H1 (cell line): ENCODE measurements at regions of chr2 and their contacts with region 1.

Region 1: GRCh38 chr2:229342376-229342775 is 71.3 kb upstream of the PID1 start:
- DNase-seq: peak; percentile 38 to 89
- H3K4me3 ChIP-seq: no peak overlapping the region
- H3K27ac ChIP-seq: no peak overlapping the region
- H3K4me1 ChIP-seq: no peaks in the 10 kb centered on the region
- H3K27me3 ChIP-seq: no peaks in the 10 kb centered on the region
- CTCF ChIP-seq: peak; percentile 84 to 85 (median 84)
- EP300 ChIP-seq: no peak
- POLR2A ChIP-seq: no peak
- RAD21 ChIP-seq: peak; percentile 82 to 87

Region 2: GRCh38 chr2:229282758-229283546 is 59.4 kb before region 1 on chr2:
- CTCF ChIA-PET with region 1: interaction called, 12 read pairs
- POLR2A ChIA-PET with region 1: no interaction called
- DNase-seq: no peak
- H3K4me3 ChIP-seq: no peak overlapping the region
- H3K27ac ChIP-seq: no peak overlapping the region
- H3K4me1 ChIP-seq: no peaks in the 10 kb centered on the region
- H3K27me3 ChIP-seq: no peaks in the 10 kb centered on the region
- CTCF ChIP-seq: no peak
- EP300 ChIP-seq: no peak
- POLR2A ChIP-seq: no peak
- RAD21 ChIP-seq: no peak

Region 3: DNA sequence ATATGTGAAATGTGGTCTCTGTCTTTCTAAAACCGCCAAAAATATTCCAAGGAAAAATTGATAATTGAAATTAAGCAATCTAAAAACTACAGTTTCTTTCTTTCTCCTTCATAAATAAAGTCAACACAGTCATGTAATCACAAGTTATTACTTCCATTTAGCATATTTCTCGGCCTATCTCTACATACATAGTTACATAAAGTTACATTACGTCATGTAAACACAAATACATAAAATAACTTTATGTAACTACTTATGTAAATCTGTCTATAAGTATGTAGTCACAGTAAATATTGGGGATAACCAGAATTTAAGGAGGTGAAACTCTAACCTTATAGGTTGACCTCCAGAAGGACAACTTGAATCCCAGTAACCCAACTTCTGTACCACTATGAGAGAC is 22.8 kb before region 1 on chr2:
- CTCF ChIA-PET with region 1: interaction called, 15 read pairs
- POLR2A ChIA-PET with region 1: no interaction called
- DNase-seq: no peak
- H3K4me3 ChIP-seq: no peak overlapping the region
- H3K27ac ChIP-seq: no peak overlapping the region
- H3K4me1 ChIP-seq: no peaks in the 10 kb centered on the region
- H3K27me3 ChIP-seq: no peaks in the 10 kb centered on the region
- CTCF ChIP-seq: no peak
- EP300 ChIP-seq: no peak
- POLR2A ChIP-seq: no peak
- RAD21 ChIP-seq: no peak

Region 4: DNA sequence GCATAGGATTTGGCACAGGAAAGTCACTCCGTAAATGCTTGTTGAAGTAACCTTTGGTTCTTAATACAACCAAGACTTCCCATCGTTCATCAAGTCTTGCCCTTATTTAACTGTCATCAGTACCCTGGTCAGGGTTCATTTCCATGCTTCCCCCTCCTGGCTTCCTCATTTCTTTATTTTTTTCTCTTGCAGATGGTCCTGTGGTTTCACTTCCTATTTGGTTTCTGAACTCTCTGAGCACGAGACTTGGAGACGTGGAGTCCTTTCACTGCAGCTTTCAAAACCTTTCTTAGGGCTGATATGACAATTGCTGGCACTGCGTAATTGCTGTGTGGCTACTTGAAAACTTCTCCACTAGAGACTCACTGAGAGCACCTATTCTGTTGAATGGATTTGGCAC is 11.4 kb before region 1 on chr2:
- CTCF ChIA-PET with region 1: interaction called, 21 read pairs
- POLR2A ChIA-PET with region 1: no interaction called
- DNase-seq: no peak
- H3K4me3 ChIP-seq: no peak overlapping the region
- H3K27ac ChIP-seq: no peak overlapping the region
- H3K4me1 ChIP-seq: no peaks in the 10 kb centered on the region; a peak in 1 of 7 replicates
- H3K27me3 ChIP-seq: no peaks in the 10 kb centered on the region
- CTCF ChIP-seq: no peak
- EP300 ChIP-seq: no peak
- POLR2A ChIP-seq: no peak
- RAD21 ChIP-seq: no peak

Region 5: DNA sequence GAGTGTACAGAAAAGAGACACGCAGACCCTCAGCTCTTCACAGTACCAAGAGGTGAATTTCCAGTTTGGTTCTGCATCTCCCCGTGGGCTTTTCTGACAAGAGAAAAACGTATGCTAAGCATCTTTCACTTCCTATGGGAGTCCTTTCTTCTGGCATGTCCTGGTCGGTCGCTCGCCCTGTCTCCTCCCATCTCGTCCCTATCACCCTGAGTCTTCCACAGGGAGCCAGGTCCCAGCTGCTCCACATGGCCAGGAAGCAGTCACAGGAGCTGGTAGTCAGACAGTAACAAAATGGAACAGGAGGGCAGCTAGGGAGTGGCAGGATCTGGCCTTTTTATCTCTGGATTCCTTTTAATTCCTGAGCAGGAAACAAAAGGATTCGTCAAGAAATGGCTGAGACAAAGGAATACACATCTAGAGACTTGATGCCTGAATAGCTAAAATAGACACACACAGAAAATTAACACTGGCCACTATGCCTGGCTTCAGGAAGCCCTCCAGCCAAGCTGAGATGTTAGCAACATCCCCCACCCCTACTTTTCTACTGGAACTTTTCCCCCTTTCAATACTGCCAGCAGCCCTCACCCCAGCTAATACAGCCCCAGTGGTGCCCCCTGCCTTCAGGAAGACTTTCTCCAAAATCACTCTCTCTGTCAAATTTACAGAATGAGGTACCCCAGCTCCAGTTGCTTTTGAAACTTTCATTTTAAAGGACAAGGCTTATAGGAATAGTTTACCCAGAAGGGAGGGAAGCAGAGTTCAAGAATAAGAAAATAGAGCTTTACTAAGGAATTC is 235.9 kb after region 1 on chr2:
- CTCF ChIA-PET with region 1: interaction called, 25 read pairs
- POLR2A ChIA-PET with region 1: no interaction called
- DNase-seq: no peak
- H3K4me3 ChIP-seq: no peak overlapping the region
- H3K27ac ChIP-seq: no peak overlapping the region
- H3K4me1 ChIP-seq: peaks cover 0 to 5% (median 4%) of the 10 kb centered on the region in 4 experiments; a peak in 3 of 7 replicates
- H3K27me3 ChIP-seq: no peaks in the 10 kb centered on the region
- CTCF ChIP-seq: peak in 2 of 3 experiments; percentile 48 to 60; a peak in 3 of 4 replicates
- EP300 ChIP-seq: no peak
- POLR2A ChIP-seq: no peak
- RAD21 ChIP-seq: peak; percentile 53 to 66